Sigmoid colon (tissue), 7 donors: ENCODE measurements at regions of chr1 and their contacts with region 1.

Region 1: DNA sequence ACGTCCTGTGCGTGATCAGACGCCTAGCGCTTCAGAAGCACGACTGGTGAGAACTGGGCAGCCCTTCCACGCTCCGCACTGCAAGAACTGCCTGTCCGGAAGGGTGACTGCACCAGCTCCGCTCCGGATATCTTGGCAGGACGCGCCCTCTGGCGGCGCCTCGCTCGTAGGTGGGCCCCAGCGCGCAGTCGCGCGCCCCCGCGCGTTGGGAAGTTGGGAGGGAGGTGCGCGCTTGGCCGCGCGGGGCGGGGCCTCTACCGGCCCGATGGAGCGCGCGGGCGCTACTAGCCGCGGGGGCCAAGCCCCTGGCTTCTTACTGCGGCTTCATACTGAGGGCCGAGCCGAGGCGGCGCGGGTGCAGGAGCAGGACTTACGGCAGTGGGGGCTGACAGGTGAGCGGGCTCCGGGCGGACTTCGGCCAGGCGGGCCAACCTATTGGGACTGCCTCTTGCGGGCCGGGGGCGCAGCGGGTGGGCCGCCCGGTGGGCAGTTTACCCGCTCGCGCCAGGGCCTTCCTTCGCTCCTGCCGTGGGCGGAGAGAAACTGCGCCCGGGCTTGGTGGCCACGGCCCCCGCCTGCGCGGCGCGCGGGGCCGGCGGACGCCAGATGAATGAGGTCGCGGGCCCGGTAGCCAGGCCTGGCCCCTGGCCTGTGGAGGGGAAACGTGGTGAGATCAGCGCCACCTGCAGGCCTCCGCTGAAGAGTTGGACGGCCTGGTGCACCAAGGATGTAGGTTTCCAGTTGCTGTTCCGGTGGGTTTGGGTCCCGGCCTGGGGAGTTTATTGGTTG is at the start of gene CHD1L:
- DNase-seq: peak; percentile 97
- H3K4me3 ChIP-seq: peak within 1 kb of the TSS; percentile 80 to 100 (median 90)
- H3K27ac ChIP-seq: peak within 1 kb of the TSS; percentile 92 to 99 (median 96)
- H3K4me1 ChIP-seq: peaks cover 0 to 25% (median 7%) of the 10 kb centered on the region in 4 donors
- H3K27me3 ChIP-seq: no peaks in the 10 kb centered on the region
- CTCF ChIP-seq: peak; percentile 73 to 87 (median 77)
- EP300 ChIP-seq: no peak
- POLR2A ChIP-seq: no peak
- total RNA-seq, gene CHD1L: 19.7 to 27.4 (median 23.6) TPM

Region 2: DNA sequence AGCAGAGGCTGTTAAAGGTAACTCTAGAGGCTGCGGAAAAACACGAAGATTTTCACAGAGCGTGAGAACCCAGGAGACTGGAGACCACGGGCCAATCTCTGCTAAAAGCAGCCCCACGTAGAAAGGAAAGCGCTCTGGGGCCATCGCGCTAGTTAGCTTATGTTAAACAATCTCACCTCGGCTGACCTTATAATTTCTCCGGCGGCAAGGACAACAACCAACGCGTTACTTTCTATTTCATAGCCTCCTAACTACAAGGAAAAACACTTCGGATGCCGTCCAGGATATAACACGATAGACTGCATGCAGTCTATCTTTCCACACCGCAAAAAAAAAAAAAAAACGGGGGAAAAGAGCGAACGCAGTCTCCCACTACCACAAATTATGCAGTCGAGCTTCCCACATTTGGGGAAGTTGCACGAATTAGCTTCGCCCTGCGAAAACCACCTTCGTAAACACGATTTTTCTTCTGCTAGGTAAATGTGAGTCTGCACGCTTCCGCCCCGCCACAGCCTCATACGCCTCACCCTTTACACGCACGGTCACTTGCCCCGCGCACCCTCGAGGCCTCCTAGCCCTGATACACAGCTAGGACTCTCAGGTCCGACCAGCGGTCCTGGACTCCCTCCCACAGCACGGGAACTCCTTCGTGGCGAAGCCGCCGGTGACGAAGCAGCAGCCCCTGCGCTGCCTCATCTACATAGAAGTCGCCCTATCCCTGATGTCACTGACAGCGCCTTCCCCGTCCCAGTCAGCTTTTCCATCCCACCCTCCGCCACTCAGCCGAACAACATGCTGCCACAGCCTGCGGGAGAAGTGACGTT is 158.1 kb before region 1 on chr1:
- intact Hi-C with region 1: loop called (anchors 10 kb)
- DNase-seq: peak; percentile 76
- H3K4me3 ChIP-seq: peak overlapping the region; percentile 31 to 53 (median 45)
- H3K27ac ChIP-seq: peak overlapping the region in 3 of 4 donors; percentile 7 to 47 (median 18)
- H3K4me1 ChIP-seq: peaks cover 0 to 31% (median 23%) of the 10 kb centered on the region in 4 donors
- H3K27me3 ChIP-seq: peaks cover 20 to 47% (median 44%) of the 10 kb centered on the region in 3 donors
- CTCF ChIP-seq: no peak
- EP300 ChIP-seq: no peak
- POLR2A ChIP-seq: no peak

Region 3: GRCh38 chr1:147172168-147172992 is 70.3 kb before region 1 on chr1 and contains the start of gene PRKAB2:
- intact Hi-C with region 1: loop called (anchors 1 kb)
- DNase-seq: peak; percentile 98
- H3K4me3 ChIP-seq: peak within 1 kb of the TSS; percentile 71 to 97 (median 76)
- H3K27ac ChIP-seq: peak within 1 kb of the TSS; percentile 91 to 96 (median 95)
- H3K4me1 ChIP-seq: peaks cover 0 to 51% (median 36%) of the 10 kb centered on the region in 4 donors
- H3K27me3 ChIP-seq: no peaks in the 10 kb centered on the region
- CTCF ChIP-seq: peak; percentile 75 to 89 (median 81)
- EP300 ChIP-seq: peak in 1 of 4 donors; percentile 42
- POLR2A ChIP-seq: peak; percentile 80
- total RNA-seq, gene PRKAB2: 33.5 to 40.3 (median 38.5) TPM

Region 4: DNA sequence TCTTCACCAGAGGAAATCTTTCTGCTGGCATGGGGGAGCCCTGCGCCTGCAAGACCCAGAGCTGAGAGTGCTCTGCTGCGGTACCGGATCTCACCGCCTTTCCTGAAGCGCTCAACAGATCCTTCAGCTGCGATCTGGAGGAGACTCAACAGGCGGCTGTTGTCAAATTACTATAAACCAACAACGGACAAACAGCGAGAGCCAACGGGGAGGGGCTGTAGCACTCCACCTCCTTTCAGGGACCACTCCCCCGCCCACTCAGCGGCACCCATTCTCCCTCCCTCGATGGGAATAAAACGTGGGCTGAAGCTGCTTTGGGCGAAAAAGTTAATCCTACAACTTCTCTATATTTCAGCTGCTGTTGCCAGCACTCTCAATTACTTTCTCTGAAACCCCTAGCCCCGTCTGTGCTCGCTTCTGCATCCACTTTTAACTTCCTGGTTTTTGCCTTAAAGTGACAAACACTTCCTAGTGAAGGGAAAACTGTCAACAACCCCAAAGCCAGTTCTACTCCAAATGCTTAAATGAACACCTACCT is 17.4 kb before region 1 on chr1 and contains the start of gene FMO5:
- intact Hi-C with region 1: loop called (anchors 2 kb)
- DNase-seq: peak; percentile 89
- H3K4me3 ChIP-seq: peak within 1 kb of the TSS; percentile 44 to 70 (median 67)
- H3K27ac ChIP-seq: peak within 1 kb of the TSS; percentile 73 to 81 (median 78)
- H3K4me1 ChIP-seq: peaks cover 0 to 5% (median 0%) of the 10 kb centered on the region in 4 donors
- H3K27me3 ChIP-seq: no peaks in the 10 kb centered on the region
- CTCF ChIP-seq: peak; percentile 21 to 54 (median 36)
- EP300 ChIP-seq: no peak
- POLR2A ChIP-seq: no peak
- total RNA-seq, gene FMO5: 1.9 to 7.1 (median 3.2) TPM